A673 (cell line): ENCODE measurements at regions of chr19 and their contacts with region 1.

Region 1: GRCh38 chr19:1113033-1113985 is 9.5 kb downstream of the GPX4 start:
- DNase-seq: peak; percentile 91
- H3K4me3 ChIP-seq: no peak overlapping the region
- H3K27ac ChIP-seq: peak overlapping the region; percentile 54
- H3K4me1 ChIP-seq: peaks cover 9% of the 10 kb centered on the region
- H3K27me3 ChIP-seq: no peaks in the 10 kb centered on the region
- CTCF ChIP-seq: peak; percentile 95

Region 2: GRCh38 chr19:872266-872951 is 240.9 kb before region 1 on chr19:
- CTCF ChIA-PET with region 1: no interaction called
- POLR2A ChIA-PET with region 1: no interaction called
- intact Hi-C with region 1: no loop called
- DNase-seq: peak; percentile 93
- H3K4me3 ChIP-seq: no peak overlapping the region
- H3K27ac ChIP-seq: peak overlapping the region; percentile 77
- H3K4me1 ChIP-seq: peaks cover 55% of the 10 kb centered on the region
- H3K27me3 ChIP-seq: no peaks in the 10 kb centered on the region
- CTCF ChIP-seq: no peak

Region 3: DNA sequence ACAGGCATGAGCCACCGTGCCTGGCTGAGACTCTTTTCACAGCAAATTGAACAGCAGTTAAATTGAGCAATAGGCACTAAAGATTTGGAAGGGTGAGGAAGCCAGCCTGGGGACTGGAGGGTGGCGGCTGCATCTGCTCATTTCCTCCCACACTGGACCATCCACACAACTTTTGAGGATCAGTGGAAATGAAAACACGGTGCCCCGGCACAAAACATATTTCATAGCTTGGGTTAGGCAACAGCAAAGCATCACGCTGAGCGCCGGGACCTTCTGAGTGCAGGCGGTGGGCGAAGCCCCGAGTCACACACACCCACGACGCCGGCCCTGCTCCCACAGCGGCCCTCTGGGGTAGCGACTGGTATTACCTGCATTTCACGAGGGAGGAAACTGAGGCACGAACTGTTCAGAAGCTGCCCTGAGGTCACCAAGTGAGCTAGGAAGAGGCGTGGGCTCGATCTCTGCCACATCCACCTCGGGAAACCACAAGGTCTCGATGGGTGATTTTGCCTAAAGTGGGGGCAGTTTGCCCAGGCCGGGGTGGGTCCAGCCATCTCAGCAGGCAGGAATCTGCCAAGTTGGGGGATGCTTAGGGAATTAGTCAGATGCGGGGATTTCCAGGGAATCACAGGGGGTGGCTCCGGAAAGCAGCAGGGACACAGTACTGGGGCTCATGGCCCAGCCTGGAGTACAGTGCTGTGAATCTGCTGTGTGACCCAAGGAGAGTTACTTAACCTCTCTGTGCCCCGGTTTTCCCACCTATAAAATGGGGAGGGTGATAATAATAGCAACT is 64.2 kb after region 1 on chr19:
- CTCF ChIA-PET with region 1: interaction called, 4 read pairs
- POLR2A ChIA-PET with region 1: no interaction called
- intact Hi-C with region 1: loop called (anchors 5 kb)
- DNase-seq: no peak
- H3K4me3 ChIP-seq: no peak overlapping the region
- H3K27ac ChIP-seq: no peak overlapping the region
- H3K4me1 ChIP-seq: peaks cover 22% of the 10 kb centered on the region
- H3K27me3 ChIP-seq: no peaks in the 10 kb centered on the region
- CTCF ChIP-seq: peak; percentile 26; the same call in 1 of the 2 replicates

Region 4: GRCh38 chr19:1189419-1189818 is 76.1 kb after region 1 on chr19:
- CTCF ChIA-PET with region 1: interaction called, 3 read pairs
- POLR2A ChIA-PET with region 1: no interaction called
- intact Hi-C with region 1: loop called (anchors 5 kb)
- DNase-seq: no peak
- H3K4me3 ChIP-seq: no peak overlapping the region
- H3K27ac ChIP-seq: no peak overlapping the region
- H3K4me1 ChIP-seq: no peaks in the 10 kb centered on the region
- H3K27me3 ChIP-seq: no peaks in the 10 kb centered on the region
- CTCF ChIP-seq: no peak

Region 5: DNA sequence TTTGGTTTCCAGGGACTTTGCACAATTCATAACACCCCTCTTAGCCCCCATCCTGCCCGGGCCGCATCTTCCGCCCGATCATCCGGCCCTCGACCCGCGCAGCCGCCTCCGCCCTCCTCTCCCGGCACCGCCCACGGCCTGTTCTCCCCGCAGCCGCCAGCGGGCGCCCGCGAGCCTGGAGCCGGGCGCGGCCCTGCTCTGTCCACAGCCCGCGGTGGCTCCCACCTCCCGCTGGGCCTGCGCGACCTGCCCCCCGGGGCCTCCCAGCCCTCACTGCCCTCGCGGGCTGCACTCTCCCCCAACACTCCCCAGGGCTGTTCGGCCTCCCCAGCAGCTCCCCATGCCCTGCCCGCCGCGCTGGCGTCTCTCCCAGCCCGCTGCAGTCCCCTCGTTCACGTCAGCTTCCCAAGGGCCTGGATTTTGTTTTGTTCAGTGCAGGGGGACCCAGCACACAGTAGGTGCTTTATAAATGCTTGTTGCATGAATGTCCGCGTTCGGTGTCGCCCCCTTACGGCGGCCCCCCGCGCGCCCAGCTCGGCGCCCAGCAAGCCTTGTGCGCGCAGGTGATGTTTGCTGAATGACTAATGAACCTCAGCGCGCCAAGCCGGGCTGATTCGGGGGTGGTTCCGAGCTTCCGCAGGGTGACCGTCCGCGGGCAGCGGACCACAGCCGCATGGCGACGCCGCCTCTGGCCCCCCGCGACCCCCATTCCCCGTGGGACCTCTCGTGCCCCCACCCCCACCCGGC is 332.0 kb after region 1 on chr19:
- CTCF ChIA-PET with region 1: no interaction called
- POLR2A ChIA-PET with region 1: no interaction called
- intact Hi-C with region 1: no loop called
- DNase-seq: peak; percentile 72
- H3K4me3 ChIP-seq: peak overlapping the region; percentile 56
- H3K27ac ChIP-seq: no peak overlapping the region
- H3K4me1 ChIP-seq: peaks cover 26% of the 10 kb centered on the region
- H3K27me3 ChIP-seq: peaks cover 23% of the 10 kb centered on the region
- CTCF ChIP-seq: peak; percentile 65